CD4-positive, alpha-beta T cell (primary cell): ENCODE measurements at regions of chr4 and their contacts with region 1.

Region 1: DNA sequence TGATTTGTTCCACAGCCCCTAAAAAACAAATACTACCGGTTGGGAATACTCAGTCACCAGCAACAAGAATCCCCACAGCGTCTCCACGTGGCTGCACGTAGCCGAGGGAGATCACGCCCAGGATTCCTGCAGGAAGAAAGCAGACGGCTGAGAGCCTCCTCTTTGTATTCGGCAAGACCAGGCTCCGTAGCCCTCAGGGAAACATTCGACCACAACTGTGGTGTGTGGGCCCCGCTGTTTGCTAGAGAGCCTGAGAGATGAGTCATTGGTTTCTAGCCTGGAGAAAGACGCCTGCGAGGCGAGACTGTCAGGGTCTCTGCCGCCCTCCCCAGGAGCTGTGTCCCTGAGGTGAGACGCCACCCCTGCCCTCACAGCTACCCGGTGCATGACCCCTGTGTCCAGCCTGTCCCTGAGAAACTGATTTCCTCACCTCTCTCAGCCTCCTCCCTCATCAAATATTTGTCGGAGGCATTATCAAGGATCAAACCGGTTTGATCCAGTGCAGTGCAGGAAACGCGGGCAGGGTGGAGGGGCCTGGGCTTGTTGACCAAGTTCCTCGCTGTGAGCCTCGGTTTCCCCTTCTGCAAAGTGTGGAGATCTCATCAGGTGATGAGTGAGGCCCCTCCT is 4.7 kb upstream of the S100P start:
- DNase-seq: peak; percentile 48 to 85 (median 69)
- ATAC-seq: peak; percentile 75
- H3K4me3 ChIP-seq: peak overlapping the region; percentile 58
- H3K4me3 Mint-ChIP-seq: peak overlapping the region; percentile 89
- H3K27ac ChIP-seq: peak overlapping the region; percentile 34 to 82
- H3K27ac Mint-ChIP-seq: peak overlapping the region; percentile 91
- H3K4me1 ChIP-seq: peaks cover 90% of the 10 kb centered on the region
- H3K4me1 Mint-ChIP-seq: peaks cover 71% of the 10 kb centered on the region
- H3K27me3 ChIP-seq: no peaks in the 10 kb centered on the region
- H3K27me3 Mint-ChIP-seq: no peaks in the 10 kb centered on the region
- CTCF ChIP-seq: no peak

Region 2: GRCh38 chr4:6701371-6701770 is 12.4 kb after region 1 on chr4:
- CTCF ChIA-PET with region 1: interaction called, 7 read pairs
- POLR2A ChIA-PET with region 1: interaction called, 58 read pairs
- intact Hi-C with region 1: no loop called
- DNase-seq: peak in 10 of 14 experiments; percentile 25 to 73 (median 46)
- ATAC-seq: peak; percentile 30
- H3K4me3 ChIP-seq: no peak overlapping the region
- H3K4me3 Mint-ChIP-seq: no peak overlapping the region
- H3K27ac ChIP-seq: no peak overlapping the region
- H3K27ac Mint-ChIP-seq: no peak overlapping the region
- H3K4me1 ChIP-seq: peaks cover 60% of the 10 kb centered on the region
- H3K4me1 Mint-ChIP-seq: peaks cover 69% of the 10 kb centered on the region
- H3K27me3 ChIP-seq: no peaks in the 10 kb centered on the region
- H3K27me3 Mint-ChIP-seq: no peaks in the 10 kb centered on the region
- CTCF ChIP-seq: peak; percentile 22

Region 3: DNA sequence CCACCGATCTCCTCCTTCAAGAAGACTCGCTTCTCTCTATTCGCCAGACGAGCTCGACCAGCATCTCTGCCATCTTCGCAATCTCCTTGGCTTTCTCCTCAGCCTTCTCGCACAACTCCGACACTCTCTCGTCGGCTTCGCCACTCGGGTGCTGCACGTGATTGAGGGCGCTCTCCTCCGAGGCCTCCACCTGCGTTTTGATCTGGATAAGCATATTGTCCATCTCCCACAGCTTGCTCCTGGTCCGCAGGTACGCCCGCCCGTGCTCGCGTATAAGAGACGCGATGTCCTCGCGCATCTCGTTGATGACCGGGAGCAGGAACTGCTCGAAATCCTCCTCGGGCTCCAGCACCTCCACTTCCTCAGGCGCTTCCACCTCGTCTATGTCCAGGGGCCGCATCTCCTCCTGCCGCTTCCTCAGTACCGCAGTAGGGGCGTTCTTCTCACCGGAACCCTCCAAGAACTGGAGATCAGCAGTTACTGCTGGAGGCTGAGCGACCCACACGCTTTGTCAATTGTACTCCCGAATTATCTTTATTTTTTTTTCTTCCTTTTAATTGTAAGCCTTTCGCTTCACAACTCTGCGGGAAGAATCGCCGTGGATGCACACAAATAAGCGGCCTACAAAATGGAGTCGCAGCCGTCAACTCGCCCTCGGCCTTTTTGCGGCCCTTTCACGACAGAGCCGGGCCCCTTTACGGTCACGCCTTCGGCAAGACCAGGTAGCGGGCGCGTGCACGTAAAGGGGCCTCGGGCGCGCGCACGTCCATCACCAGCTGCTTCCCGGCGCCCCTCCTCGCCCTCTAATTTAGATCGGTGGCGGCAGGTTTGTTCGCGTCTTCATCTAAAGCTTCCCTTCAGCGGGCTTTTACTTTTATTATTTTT is 20.5 kb after region 1 on chr4 and contains the start of gene MRFAP1L1:
- CTCF ChIA-PET with region 1: interaction called, 5 read pairs
- POLR2A ChIA-PET with region 1: interaction called, 58 read pairs
- intact Hi-C with region 1: no loop called
- DNase-seq: peak; percentile 94 to 98 (median 96)
- ATAC-seq: peak; percentile 87
- H3K4me3 ChIP-seq: peak within 1 kb of the TSS; percentile 74
- H3K4me3 Mint-ChIP-seq: peak within 1 kb of the TSS; percentile 99
- H3K27ac ChIP-seq: peak within 1 kb of the TSS; percentile 79 to 85
- H3K27ac Mint-ChIP-seq: peak within 1 kb of the TSS; percentile 97
- H3K4me1 ChIP-seq: peaks cover 40% of the 10 kb centered on the region
- H3K4me1 Mint-ChIP-seq: peaks cover 69% of the 10 kb centered on the region
- H3K27me3 ChIP-seq: no peaks in the 10 kb centered on the region
- H3K27me3 Mint-ChIP-seq: no peaks in the 10 kb centered on the region
- CTCF ChIP-seq: no peak
- total RNA-seq, gene MRFAP1L1: 26.6 to 27.0 TPM

Region 4: DNA sequence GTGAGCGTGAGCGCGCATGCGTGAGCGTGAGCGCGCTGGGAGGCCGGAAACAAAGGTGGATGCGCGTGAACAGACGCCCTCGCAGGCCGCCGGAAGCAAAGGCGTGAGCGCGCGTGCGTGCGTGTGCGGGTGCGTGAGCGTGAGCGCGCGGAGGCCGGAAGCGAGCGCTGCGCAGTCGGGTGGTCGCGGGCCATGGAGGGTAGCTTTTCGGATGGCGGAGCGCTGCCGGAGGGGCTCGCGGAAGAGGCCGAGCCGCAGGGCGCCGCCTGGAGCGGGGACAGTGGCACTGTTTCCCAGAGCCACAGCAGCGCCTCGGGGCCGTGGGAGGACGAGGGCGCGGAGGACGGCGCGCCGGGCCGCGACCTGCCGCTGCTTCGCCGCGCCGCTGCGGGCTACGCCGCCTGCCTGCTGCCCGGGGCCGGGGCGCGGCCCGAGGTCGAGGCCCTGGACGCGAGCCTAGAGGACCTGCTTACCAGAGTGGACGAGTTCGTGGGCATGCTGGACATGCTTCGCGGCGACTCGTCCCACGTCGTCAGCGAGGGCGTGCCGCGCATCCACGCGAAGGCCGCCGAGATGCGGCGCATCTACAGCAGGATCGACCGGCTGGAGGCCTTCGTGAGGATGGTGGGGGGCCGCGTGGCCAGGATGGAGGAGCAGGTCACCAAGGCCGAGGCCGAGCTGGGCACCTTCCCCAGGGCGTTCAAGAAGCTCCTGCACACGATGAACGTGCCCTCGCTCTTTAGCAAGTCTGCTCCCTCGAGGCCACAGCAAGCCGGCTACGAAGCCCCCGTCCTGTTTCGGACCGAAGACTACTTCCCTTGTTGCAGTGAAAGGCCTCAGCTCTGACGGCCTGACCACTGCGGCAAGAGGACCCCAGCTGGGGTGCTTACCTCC is 27.3 kb after region 1 on chr4 and contains the start of gene BLOC1S4:
- CTCF ChIA-PET with region 1: interaction called, 3 read pairs
- POLR2A ChIA-PET with region 1: interaction called, 38 read pairs
- intact Hi-C with region 1: no loop called
- DNase-seq: peak; percentile 79 to 98 (median 88)
- ATAC-seq: peak; percentile 79
- H3K4me3 ChIP-seq: peak within 1 kb of the TSS; percentile 95
- H3K4me3 Mint-ChIP-seq: peak within 1 kb of the TSS; percentile 99
- H3K27ac ChIP-seq: peak within 1 kb of the TSS; percentile 82 to 85
- H3K27ac Mint-ChIP-seq: peak within 1 kb of the TSS; percentile 99
- H3K4me1 ChIP-seq: peaks cover 31% of the 10 kb centered on the region
- H3K4me1 Mint-ChIP-seq: peaks cover 39% of the 10 kb centered on the region
- H3K27me3 ChIP-seq: no peaks in the 10 kb centered on the region
- H3K27me3 Mint-ChIP-seq: no peaks in the 10 kb centered on the region
- CTCF ChIP-seq: no peak
- total RNA-seq, gene BLOC1S4: 24.6 to 27.6 TPM